Posterior vena cava (tissue), 2 donors: ENCODE measurements at regions of chr17 and their contacts with region 1.

Region 1: DNA sequence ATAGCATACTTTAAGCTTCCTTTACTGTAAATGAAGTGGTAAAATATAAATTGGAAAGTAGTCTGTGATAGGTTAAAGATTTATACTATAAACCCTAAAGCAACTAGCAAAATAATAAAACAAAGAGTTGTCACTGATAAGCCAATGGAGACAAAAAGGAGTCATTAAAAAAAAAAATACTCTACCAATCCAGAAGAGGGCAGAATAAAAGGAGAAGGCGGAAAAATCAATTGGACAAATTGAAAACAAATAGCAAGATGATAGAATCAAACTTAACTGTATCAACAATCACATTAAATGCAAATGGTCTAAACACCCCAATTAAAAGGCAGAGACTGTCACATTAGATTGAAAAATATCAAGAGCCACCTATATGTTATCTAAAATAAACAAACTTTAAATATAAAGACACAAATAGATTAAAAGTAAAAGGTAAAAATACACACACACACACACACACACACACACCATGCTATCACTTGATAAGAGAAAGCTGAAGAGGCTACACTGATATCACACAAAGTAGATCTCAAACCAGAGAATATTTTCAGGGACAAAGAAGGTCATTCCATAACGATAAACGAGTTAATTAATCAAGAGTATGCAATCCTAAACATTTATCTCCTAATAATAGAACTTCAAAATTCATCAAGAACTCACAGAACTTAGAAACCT is 71.8 kb downstream of the CACNG1 start:
- DNase-seq: no peak

Region 2: GRCh38 chr17:66605541-66605940 is 510.6 kb before region 1 on chr17:
- intact Hi-C with region 1: loop called in 1 of 2 experiments (anchors 5 kb)
- DNase-seq: no peak

Region 3: GRCh38 chr17:67171560-67171959 is 55.4 kb after region 1 on chr17:
- intact Hi-C with region 1: no loop called
- DNase-seq: no peak